ENCODE measurements at regions of chr11 and their contacts with region 1.

Region 1: GRCh38 chr11:62169091-62169847 is 20.7 kb upstream of the SCGB1D1 start:
- DNase-seq: no peak
- H3K4me3 ChIP-seq: no peak overlapping the region
- H3K27ac ChIP-seq: no peak overlapping the region
- H3K4me1 ChIP-seq: no peaks in the 10 kb centered on the region
- H3K27me3 ChIP-seq: peaks cover 54% of the 10 kb centered on the region
- CTCF ChIP-seq: no peak
- EP300 ChIP-seq: no peak
- RAD21 ChIP-seq: no peak

Region 2: DNA sequence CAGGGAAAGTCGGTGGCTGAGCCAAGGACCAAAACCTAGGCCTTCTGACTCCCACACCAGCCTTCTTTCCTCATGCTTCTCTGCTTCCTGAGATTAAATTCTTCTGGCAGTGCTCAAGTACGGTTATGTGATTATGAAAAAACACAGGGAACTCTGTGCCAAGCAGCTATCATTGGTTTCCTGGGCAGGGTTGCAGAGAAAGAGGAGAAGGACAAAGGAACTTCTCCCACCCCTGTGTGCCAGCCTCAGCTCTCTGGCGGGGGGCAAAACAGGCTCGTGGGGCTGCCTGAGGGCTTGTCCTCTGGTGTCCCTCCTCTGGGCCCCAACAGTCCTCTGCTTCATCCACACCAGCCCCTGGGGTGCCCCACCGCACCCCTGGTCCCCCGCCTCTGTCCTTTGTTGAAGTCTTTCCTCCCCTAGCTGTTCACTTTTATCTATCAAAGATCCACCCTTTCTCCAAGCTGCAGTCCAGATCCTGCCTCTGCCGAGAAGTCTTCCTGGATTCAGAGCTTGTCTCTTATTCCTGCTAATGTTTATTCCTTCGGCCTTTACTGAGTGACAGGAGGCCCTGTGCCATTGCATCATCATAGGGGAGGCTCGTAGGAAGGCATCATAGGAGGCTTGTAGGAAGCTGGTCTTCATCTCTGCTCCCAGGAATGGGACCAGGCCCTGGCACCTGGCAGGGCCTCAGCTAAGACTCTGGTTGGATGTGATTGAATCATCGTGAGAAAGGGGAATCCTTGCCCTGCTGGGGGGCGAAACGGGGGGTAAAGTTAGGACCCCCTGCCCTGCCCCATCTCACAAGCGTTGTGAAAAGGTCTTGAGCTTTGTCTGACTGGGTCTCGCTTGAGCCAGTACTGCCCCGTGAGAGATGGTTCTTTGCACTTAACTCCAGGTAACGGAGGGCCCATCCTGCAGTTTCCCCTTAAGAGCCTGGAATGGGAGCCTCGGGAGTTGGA is 190.3 kb before region 1 on chr11:
- CTCF ChIA-PET with region 1: no interaction called
- POLR2A ChIA-PET with region 1: no interaction called
- DNase-seq: no peak
- H3K4me3 ChIP-seq: no peak overlapping the region
- H3K27ac ChIP-seq: peak overlapping the region; percentile 40 to 63
- H3K4me1 ChIP-seq: peaks cover 7 to 14% of the 10 kb centered on the region in 2 experiments; a peak in 3 of 4 replicates
- H3K27me3 ChIP-seq: no peaks in the 10 kb centered on the region
- CTCF ChIP-seq: no peak
- EP300 ChIP-seq: no peak
- RAD21 ChIP-seq: no peak

Region 3: GRCh38 chr11:62157603-62158002 is 11.7 kb before region 1 on chr11:
- CTCF ChIA-PET with region 1: interaction called, 14 read pairs
- POLR2A ChIA-PET with region 1: no interaction called
- DNase-seq: no peak
- H3K4me3 ChIP-seq: no peak overlapping the region
- H3K27ac ChIP-seq: no peak overlapping the region
- H3K4me1 ChIP-seq: no peaks in the 10 kb centered on the region
- H3K27me3 ChIP-seq: peaks cover 6% of the 10 kb centered on the region; the same call in 1 of the 2 replicates
- CTCF ChIP-seq: no peak
- EP300 ChIP-seq: no peak
- RAD21 ChIP-seq: no peak

Region 4: GRCh38 chr11:62186195-62186594 is 16.9 kb after region 1 on chr11:
- CTCF ChIA-PET with region 1: interaction called, 11 read pairs
- POLR2A ChIA-PET with region 1: no interaction called
- DNase-seq: no peak
- H3K4me3 ChIP-seq: no peak overlapping the region
- H3K27ac ChIP-seq: no peak overlapping the region
- H3K4me1 ChIP-seq: no peaks in the 10 kb centered on the region; a peak in 1 of 4 replicates
- H3K27me3 ChIP-seq: peaks cover 26% of the 10 kb centered on the region
- CTCF ChIP-seq: no peak
- EP300 ChIP-seq: no peak
- RAD21 ChIP-seq: no peak

Region 5: DNA sequence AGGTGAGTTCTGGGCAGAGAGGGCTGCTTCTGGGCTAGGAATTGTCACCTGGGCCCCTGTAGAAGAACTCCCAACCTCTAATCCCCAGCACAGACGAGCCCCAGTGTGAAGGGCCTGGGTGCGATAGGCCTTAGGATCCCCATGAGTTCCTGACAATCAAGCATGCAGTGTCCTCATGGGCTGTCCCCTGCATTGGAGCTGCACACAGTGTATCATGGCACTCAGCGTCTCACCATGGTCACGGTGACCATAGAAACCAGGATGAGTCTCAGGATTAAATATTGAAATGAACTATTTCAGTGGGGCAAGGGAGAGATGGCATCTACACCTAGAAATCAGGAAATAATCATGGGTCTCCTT is 39.5 kb after region 1 on chr11:
- CTCF ChIA-PET with region 1: interaction called, 10 read pairs
- POLR2A ChIA-PET with region 1: no interaction called
- DNase-seq: no peak
- H3K4me3 ChIP-seq: no peak overlapping the region
- H3K27ac ChIP-seq: no peak overlapping the region
- H3K4me1 ChIP-seq: no peaks in the 10 kb centered on the region
- H3K27me3 ChIP-seq: peaks cover 18% of the 10 kb centered on the region
- CTCF ChIP-seq: no peak
- EP300 ChIP-seq: no peak
- RAD21 ChIP-seq: no peak

Region 6: GRCh38 chr11:62309991-62310390 is 140.7 kb after region 1 on chr11:
- CTCF ChIA-PET with region 1: interaction called, 37 read pairs
- POLR2A ChIA-PET with region 1: no interaction called
- DNase-seq: no peak
- H3K4me3 ChIP-seq: peak overlapping the region in 1 of 2 experiments; percentile 26; a peak in 1 of 4 replicates
- H3K27ac ChIP-seq: no peak overlapping the region
- H3K4me1 ChIP-seq: no peaks in the 10 kb centered on the region
- H3K27me3 ChIP-seq: peaks cover 32% of the 10 kb centered on the region
- CTCF ChIP-seq: no peak
- EP300 ChIP-seq: no peak
- RAD21 ChIP-seq: no peak